ENCODE measurements at regions of chr2 and their contacts with region 1.

Region 1: DNA sequence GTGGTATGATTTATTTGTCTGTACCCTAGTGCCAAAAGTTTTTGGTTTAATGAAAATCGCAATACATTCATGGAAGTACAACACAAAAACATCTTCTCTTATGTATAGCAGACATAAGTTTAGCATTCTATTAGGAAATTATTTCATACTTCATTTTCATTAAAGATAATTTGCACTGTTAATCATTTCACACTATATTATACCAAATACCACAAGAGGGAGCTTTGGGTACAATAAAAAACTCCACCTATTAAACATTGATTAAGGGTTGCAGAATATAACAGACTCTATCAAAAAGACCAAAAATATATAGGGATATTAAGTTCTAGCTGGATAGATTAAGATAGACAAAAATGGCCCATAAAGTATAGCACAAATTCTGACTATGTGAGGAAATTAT is 79.0 kb downstream of the SLC66A3 start:
- DNase-seq: no peak
- ATAC-seq: peak in 4 of 8 donors; percentile 37 to 51 (median 46)
- H3K4me3 ChIP-seq: no peak overlapping the region
- H3K27ac ChIP-seq: no peak overlapping the region
- H3K4me1 ChIP-seq: peaks cover 0 to 29% (median 16%) of the 10 kb centered on the region in 9 donors
- H3K27me3 ChIP-seq: no peaks in the 10 kb centered on the region
- CTCF ChIP-seq: peak; percentile 41 to 75 (median 57)

Region 2: DNA sequence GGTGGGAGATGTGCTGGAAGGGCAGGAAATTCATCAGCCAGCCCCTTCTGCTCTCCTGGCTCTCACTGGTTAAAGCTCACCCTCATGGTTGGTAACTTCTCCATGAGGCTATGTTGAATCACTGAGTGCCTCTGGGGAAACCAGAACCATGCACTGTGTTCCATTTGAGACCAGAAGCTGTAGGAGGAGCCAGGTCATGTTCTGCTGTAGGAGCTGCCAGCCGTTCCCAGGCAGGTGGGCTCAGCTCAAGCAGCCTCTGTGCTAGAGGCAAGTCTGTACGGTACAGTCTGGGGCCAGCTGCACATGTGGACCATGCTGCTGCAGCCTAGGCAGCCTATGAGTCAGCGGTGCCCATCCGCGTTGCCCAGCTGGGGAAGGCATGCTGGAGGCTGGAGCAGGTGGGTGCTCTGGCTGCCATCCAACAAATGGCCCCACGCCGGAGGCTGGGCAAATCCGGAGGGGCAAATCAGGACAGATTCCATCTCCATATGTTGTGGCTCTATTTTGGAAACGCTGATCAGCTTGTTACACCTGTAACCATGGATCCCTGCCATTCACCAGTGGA is 344.6 kb before region 1 on chr2:
- intact Hi-C with region 1: no loop called
- DNase-seq: no peak
- ATAC-seq: peak; percentile 17 to 55 (median 42)
- H3K4me3 ChIP-seq: no peak overlapping the region
- H3K27ac ChIP-seq: no peak overlapping the region
- H3K4me1 ChIP-seq: peaks cover 0 to 13% (median 1%) of the 10 kb centered on the region in 9 donors
- H3K27me3 ChIP-seq: no peaks in the 10 kb centered on the region
- CTCF ChIP-seq: no peak

Region 3: DNA sequence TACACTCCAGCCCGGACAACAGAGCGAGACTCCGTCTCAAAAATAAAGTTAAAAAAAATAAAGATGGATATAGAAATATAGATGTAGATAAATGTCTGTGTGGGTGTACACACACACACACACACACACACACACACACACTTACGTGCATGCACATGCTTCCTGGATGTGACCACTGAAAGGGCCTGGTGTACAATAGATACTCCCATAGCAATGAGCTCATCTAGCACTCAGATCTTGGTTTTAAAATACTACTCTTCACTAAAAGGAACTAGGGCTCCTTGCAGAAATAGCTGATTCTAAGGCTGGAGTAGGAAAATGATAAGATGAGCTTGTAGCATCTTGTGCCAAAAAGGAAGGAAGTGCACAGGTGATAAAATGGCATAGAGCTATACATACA is 71.0 kb after region 1 on chr2:
- intact Hi-C with region 1: no loop called
- DNase-seq: no peak
- ATAC-seq: peak in 1 of 8 donors; percentile 18
- H3K4me3 ChIP-seq: no peak overlapping the region
- H3K27ac ChIP-seq: no peak overlapping the region
- H3K4me1 ChIP-seq: peaks cover 0 to 56% (median 37%) of the 10 kb centered on the region in 9 donors
- H3K27me3 ChIP-seq: no peaks in the 10 kb centered on the region
- CTCF ChIP-seq: no peak

Region 4: GRCh38 chr2:11411768-11412448 is 177.6 kb after region 1 on chr2:
- intact Hi-C with region 1: loop called (anchors 1 to 5 kb)
- DNase-seq: peak in 1 of 2 donors; percentile 80
- ATAC-seq: peak; percentile 38 to 85 (median 73)
- H3K4me3 ChIP-seq: peak overlapping the region in 9 of 10 donors; percentile 26 to 56 (median 46)
- H3K27ac ChIP-seq: peak overlapping the region in 4 of 10 donors; percentile 2 to 53 (median 26)
- H3K4me1 ChIP-seq: peaks cover 0 to 19% (median 10%) of the 10 kb centered on the region in 9 donors
- H3K27me3 ChIP-seq: no peaks in the 10 kb centered on the region
- CTCF ChIP-seq: peak; percentile 73 to 95 (median 86)

Region 5: DNA sequence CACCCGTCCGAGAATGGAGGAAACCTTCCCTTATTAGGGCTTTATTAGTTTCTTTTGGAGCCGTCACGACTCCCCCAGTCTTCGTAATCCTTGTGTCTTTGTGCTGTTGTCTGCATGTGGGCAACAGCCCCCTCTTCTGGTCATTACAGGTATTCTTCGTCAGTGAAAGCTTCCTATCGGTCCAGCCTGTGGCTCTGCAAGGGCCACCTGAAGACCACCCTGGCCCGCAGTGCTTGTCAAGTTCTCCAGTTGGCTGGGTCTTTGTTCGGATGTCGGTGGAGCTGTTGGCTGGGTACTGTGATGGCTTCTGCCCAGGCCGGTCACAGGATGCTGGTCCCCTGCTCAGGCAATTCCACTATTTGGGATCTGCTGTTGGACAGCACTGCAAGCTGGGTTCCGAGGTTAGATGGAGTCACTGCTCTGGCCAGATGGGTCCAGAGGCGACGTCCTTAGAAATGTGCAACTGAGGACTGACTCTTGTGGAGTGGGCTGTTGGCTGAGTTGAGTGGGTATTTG is 212.5 kb after region 1 on chr2:
- intact Hi-C with region 1: loop called in 4 of 10 experiments (anchors 5 to 10 kb)
- DNase-seq: peak in 1 of 2 donors; percentile 58
- ATAC-seq: peak; percentile 58 to 83 (median 80)
- H3K4me3 ChIP-seq: no peak overlapping the region
- H3K27ac ChIP-seq: no peak overlapping the region
- H3K4me1 ChIP-seq: no peaks in the 10 kb centered on the region
- H3K27me3 ChIP-seq: no peaks in the 10 kb centered on the region
- CTCF ChIP-seq: peak; percentile 71 to 92 (median 83)

Measured in heart right ventricle (tissue), 16 donors.